Dendritic cell treated with granulocyte-macrophage colony-stimulating factor and Interleukin-4, amounts not matched to agents 40 ng/mL and 50 ng/mL, for 4 days (primary cell): ENCODE measurements at regions of chr3 and their contacts with region 1.

Region 1: GRCh38 chr3:195909644-195910508 is 1.5 kb upstream of the TNK2 start:
- H3K4me3 Mint-ChIP-seq: peak overlapping the region; percentile 71
- H3K27ac Mint-ChIP-seq: peak overlapping the region; percentile 66
- H3K4me1 Mint-ChIP-seq: peaks cover 58% of the 10 kb centered on the region
- H3K27me3 Mint-ChIP-seq: peaks cover 3% of the 10 kb centered on the region

Region 2: GRCh38 chr3:195863121-195864006 is 46.5 kb before region 1 on chr3:
- intact Hi-C with region 1: loop called (anchors 1 kb)
- H3K4me3 Mint-ChIP-seq: no peak overlapping the region
- H3K27ac Mint-ChIP-seq: no peak overlapping the region
- H3K4me1 Mint-ChIP-seq: peaks cover 15% of the 10 kb centered on the region
- H3K27me3 Mint-ChIP-seq: peaks cover 16% of the 10 kb centered on the region